Heart right ventricle (tissue), 16 donors: ENCODE measurements at regions of chr1 and their contacts with region 1.

Region 1: GRCh38 chr1:86499987-86500593 is 31.4 kb downstream of the CLCA1 start:
- DNase-seq: no peak
- ATAC-seq: no peak
- H3K4me3 ChIP-seq: no peak overlapping the region
- H3K27ac ChIP-seq: peak overlapping the region in 5 of 10 donors; percentile 37 to 94 (median 93)
- H3K4me1 ChIP-seq: peaks cover 0 to 52% (median 25%) of the 10 kb centered on the region in 9 donors
- H3K27me3 ChIP-seq: no peaks in the 10 kb centered on the region
- CTCF ChIP-seq: peak; percentile 66 to 98 (median 87)

Region 2: DNA sequence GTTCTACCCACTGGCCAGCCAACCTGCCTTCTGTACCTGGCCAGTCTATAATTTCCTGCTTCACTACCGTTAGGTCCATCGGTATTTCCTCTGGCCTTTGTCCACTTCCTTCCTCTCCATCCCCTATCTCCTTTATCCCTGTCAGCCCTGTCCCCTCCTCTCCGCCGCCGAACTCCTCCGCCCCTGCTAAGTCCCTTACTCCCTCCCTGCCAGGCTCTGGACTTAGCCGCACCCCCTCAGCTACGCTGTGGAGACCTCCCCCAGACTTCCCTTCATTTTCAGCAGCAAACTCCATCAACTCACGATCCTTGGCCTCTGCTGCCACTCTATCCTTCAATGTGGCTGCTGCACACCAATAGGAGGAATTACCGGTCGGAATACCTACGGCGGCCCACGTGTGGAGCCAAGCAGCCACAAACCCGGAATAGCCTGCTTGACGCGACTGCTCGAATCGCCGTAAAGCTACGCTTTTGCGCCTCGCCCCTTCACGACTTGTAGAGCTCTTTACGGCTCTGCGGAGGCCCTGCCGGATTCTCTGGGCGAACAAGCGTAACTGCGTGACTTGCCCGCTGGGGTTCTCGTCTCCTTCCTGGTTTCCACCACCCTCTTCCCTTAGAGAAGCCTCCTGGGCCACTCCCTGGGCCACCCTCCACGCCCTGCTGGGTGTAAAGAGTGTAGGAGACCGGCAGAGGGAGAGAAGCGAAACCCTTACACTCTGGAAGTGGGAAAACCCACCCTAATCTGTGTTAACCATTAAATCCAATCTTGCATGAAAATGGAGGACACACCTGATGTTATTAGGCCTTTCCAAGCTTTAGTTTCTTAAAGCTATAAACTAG is 791.9 kb before region 1 on chr1 and contains the start of gene ZNHIT6:
- intact Hi-C with region 1: loop called in 1 of 10 experiments (anchors 10 kb)
- DNase-seq: peak; percentile 83 to 92
- ATAC-seq: peak; percentile 88 to 98 (median 97)
- H3K4me3 ChIP-seq: peak within 1 kb of the TSS; percentile 62 to 91 (median 77)
- H3K27ac ChIP-seq: peak within 1 kb of the TSS; percentile 73 to 98 (median 90)
- H3K4me1 ChIP-seq: peaks cover 0 to 26% (median 16%) of the 10 kb centered on the region in 9 donors
- H3K27me3 ChIP-seq: no peaks in the 10 kb centered on the region
- CTCF ChIP-seq: peak in 7 of 9 donors; percentile 18 to 47 (median 44)
- total RNA-seq, gene ZNHIT6: 8.7 to 12.8 (median 10.5) TPM

Region 3: DNA sequence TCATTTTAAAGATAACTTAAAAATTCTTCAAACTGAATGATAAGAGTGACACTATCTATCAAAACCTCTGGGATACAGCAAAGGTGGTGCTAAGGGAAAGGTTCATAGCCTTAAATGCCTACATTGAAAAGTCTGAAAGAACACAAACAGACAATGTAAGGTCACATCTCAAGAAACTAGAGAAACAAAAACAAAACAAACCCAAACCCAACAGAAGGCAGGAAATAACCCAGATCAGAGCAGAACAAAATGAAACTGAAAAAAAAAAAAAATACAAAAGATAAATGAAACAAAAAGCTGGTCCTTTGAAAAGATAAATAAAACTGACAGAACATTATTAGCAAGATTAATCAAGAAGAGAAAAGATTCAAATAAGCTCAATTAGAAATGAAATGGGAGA is 110.8 kb before region 1 on chr1:
- intact Hi-C with region 1: loop called in 4 of 10 experiments (anchors 5 to 10 kb)
- DNase-seq: no peak
- ATAC-seq: no peak
- H3K4me3 ChIP-seq: no peak overlapping the region
- H3K27ac ChIP-seq: peak overlapping the region in 2 of 10 donors; percentile 11 to 46
- H3K4me1 ChIP-seq: peaks cover 0 to 26% (median 5%) of the 10 kb centered on the region in 9 donors
- H3K27me3 ChIP-seq: no peaks in the 10 kb centered on the region
- CTCF ChIP-seq: no peak

Region 4: GRCh38 chr1:86470859-86471258 is 29.2 kb before region 1 on chr1:
- intact Hi-C with region 1: loop called in 6 of 10 experiments (anchors 2 to 5 kb)
- DNase-seq: no peak
- ATAC-seq: no peak
- H3K4me3 ChIP-seq: no peak overlapping the region
- H3K27ac ChIP-seq: no peak overlapping the region
- H3K4me1 ChIP-seq: no peaks in the 10 kb centered on the region
- H3K27me3 ChIP-seq: peaks cover 0 to 8% (median 0%) of the 10 kb centered on the region in 7 donors
- CTCF ChIP-seq: no peak

Region 5: GRCh38 chr1:86573763-86574484 is 73.8 kb after region 1 on chr1:
- intact Hi-C with region 1: no loop called
- DNase-seq: no peak
- ATAC-seq: no peak
- H3K4me3 ChIP-seq: no peak overlapping the region
- H3K27ac ChIP-seq: no peak overlapping the region
- H3K4me1 ChIP-seq: no peaks in the 10 kb centered on the region
- H3K27me3 ChIP-seq: no peaks in the 10 kb centered on the region
- CTCF ChIP-seq: no peak

Region 6: DNA sequence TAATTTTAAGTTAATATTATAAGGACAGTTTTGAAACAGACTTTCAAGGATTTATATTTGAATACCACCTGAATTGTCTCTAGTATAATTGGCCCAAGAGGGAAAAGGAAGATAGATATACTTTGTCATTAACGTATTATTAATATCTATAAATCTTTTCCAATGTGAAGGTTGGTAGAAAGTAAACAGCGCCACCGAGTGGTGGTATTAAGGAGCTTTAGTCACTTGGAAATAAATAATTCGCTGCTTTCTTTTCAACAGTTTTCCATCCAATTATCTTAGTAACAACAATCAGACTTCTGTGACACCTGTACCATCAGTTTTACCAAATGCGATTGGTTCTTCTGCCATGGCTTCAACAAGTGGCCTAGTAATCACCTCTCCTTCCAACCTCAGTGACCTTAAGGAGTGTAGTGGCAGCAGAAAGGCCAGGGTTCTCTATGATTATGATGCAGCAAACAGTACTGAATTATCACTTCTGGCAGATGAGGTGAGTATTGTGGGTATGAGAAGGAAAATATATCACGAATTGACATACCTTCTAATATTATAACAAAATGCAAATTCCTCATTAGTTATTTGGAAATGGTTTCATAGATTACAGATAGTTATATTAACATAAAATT is 242.0 kb after region 1 on chr1:
- intact Hi-C with region 1: loop called in 2 of 10 experiments (anchors 5 to 10 kb)
- DNase-seq: peak in 1 of 2 donors; percentile 29
- ATAC-seq: no peak
- H3K4me3 ChIP-seq: no peak overlapping the region
- H3K27ac ChIP-seq: no peak overlapping the region
- H3K4me1 ChIP-seq: peaks cover 0 to 18% (median 14%) of the 10 kb centered on the region in 9 donors
- H3K27me3 ChIP-seq: no peaks in the 10 kb centered on the region
- CTCF ChIP-seq: peak; percentile 16 to 81 (median 68)